ENCODE measurements at regions of chr2 and their contacts with region 1.

Region 1: DNA sequence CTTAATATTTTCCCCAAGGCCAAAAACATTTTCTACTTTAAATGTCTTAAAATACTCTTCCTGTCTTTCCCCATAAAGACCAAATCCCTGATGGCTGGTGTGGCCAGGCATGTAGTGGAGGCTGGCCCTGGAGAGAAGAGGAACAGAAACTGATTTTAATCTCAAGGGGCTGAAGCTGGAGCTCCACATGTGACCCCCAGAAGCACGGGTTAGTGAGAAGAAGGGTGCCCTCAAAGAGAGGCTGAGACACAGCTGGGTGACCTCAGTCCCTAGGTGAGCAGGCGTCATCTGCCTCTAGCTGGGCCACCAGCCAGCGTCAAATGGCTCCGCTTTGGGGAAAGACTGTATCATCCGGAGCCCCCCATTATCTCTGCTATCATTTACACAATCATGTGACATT is 19.3 kb upstream of the TMEM18 start:
- DNase-seq: no peak
- ATAC-seq: no peak
- H3K4me3 ChIP-seq: no peak overlapping the region
- H3K27ac ChIP-seq: no peak overlapping the region
- H3K4me1 ChIP-seq: peaks cover 5% of the 10 kb centered on the region
- H3K27me3 ChIP-seq: no peaks in the 10 kb centered on the region
- CTCF ChIP-seq: no peak
- POLR2A ChIP-seq: no peak
- RAD21 ChIP-seq: no peak

Region 2: DNA sequence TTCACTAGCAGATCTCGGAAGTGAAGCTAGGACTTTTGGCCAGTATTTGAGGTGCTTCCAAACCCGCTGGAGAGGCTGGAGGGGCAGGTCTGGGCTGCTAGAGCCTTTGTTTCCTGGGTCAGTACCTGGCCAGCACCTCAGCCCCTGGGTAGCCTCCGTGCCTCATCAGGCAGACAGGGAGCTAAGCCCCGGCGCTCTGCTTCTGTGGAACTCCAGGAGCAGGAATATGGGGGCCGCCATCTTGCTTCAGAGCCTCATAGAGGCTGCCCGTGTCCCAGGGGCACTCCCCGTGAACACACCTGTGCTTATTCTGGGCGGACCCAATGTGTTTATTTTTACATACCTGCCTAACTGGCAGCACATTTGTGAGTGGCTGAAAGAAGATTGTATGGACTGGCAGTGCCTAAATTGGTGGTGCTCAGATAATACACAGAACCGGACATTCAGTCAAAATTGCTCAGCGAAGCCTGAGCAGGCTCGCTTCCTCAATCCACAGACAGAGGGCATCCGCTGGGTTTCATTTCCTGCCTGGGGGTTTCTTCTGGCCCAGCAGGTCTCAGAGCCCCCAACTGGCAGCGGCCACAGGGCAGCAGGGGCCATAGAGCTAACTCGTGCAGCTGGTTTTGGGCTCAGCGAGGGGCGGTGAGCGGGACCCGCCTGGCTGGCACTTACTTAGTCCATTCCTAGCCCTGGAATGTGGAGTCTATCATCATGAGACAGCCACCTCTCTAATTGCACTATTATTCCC is 231.7 kb before region 1 on chr2:
- CTCF ChIA-PET with region 1: no interaction called
- POLR2A ChIA-PET with region 1: no interaction called
- dilution Hi-C with region 1: no loop called
- in situ Hi-C with region 1: no loop called
- intact Hi-C with region 1: no loop called
- DNase-seq: no peak
- ATAC-seq: no peak
- H3K4me3 ChIP-seq: no peak overlapping the region
- H3K27ac ChIP-seq: no peak overlapping the region
- H3K4me1 ChIP-seq: no peaks in the 10 kb centered on the region
- H3K27me3 ChIP-seq: no peaks in the 10 kb centered on the region
- CTCF ChIP-seq: no peak
- POLR2A ChIP-seq: no peak
- RAD21 ChIP-seq: no peak

Region 3: GRCh38 chr2:1051064-1051983 is 354.9 kb after region 1 on chr2:
- CTCF ChIA-PET with region 1: no interaction called
- POLR2A ChIA-PET with region 1: no interaction called
- dilution Hi-C with region 1: no loop called
- in situ Hi-C with region 1: no loop called
- intact Hi-C with region 1: loop called (anchors 10 kb)
- DNase-seq: peak; percentile 37
- ATAC-seq: no peak
- H3K4me3 ChIP-seq: no peak overlapping the region
- H3K27ac ChIP-seq: no peak overlapping the region
- H3K4me1 ChIP-seq: peaks cover 16% of the 10 kb centered on the region
- H3K27me3 ChIP-seq: no peaks in the 10 kb centered on the region
- CTCF ChIP-seq: peak; percentile 26; the same call in 1 of the 2 replicates
- POLR2A ChIP-seq: no peak
- RAD21 ChIP-seq: no peak